PC-9 (cell line): ENCODE measurements at regions of chr7 and their contacts with region 1.

Region 1: DNA sequence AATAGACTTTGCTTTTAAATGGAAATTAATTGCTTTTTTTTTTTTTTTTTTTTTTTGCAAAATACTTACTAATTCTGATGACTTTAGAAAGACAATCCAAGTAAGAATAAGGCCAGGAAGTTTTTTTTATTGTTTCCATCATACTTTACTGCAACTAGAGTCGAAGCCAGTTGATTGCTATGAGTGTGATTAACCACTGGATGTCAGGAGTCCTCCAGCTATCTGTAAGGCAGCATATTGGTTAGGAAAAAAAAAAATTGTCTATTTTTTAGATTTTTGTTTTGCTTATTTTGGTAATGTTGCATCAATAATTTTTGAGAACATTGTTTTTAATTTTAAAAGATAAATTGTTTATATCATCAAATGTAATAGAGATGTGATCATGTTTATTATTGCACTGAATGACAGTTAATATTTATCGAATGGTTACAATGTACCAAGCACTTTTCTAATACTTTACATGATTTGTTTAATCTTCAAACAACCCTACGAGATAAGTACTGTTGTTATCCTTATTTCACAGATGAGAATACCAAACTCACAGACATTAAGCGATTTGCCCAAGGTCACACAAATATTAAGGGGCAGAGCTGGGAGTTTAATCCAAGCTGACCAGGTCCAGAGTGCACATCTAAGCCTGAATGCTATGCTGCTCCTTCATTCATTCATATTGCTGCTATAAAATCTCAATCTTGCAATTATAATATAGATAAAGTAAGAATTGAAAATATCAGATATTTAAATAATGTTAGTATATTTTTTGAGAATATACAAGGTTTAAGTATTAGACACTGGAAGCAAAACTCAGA is 19.9 kb upstream of the LMOD2 start:
- DNase-seq: no peak
- H3K4me3 ChIP-seq: no peak overlapping the region
- H3K27ac ChIP-seq: no peak overlapping the region
- H3K4me1 ChIP-seq: peaks cover 18% of the 10 kb centered on the region
- H3K27me3 ChIP-seq: no peaks in the 10 kb centered on the region
- CTCF ChIP-seq: peak; percentile 69

Region 2: GRCh38 chr7:122743211-122743610 is 892.5 kb before region 1 on chr7:
- CTCF ChIA-PET with region 1: interaction called, 15 read pairs
- POLR2A ChIA-PET with region 1: no interaction called
- intact Hi-C with region 1: no loop called
- DNase-seq: no peak
- H3K4me3 ChIP-seq: no peak overlapping the region
- H3K27ac ChIP-seq: no peak overlapping the region
- H3K4me1 ChIP-seq: no peaks in the 10 kb centered on the region
- H3K27me3 ChIP-seq: no peaks in the 10 kb centered on the region
- CTCF ChIP-seq: no peak

Region 3: DNA sequence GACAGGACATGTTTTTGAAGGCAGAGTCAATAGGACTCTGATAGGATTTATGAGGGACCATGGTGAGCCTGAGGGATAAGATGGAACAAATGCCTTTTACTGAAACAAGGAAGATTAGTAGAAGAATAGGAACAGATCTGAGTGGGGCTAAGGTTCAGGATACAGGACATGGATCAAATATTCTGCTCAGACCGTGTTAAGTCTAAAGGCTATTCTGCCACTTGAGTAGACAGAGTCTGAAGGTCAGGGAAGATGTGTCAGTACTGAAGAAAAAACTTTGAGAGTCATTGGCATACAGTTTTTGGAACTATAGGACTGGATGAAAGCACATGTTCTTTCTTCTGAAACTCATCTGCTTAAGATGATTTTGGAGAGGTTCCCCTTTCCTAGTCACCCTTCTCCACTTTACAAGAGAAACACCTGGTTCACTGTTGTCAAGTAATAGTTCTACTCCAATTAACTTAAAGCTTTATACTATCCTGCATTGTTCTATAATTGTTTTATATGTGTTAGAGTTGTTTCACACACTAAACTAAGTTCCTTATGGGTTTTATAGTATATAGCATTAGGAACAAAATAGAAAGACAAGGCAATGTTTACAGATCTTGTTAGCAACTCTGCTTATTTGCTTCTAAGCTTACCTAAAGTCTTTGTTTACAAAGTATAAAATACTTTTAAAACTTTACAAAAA is 69.6 kb after region 1 on chr7:
- CTCF ChIA-PET with region 1: interaction called, 4 read pairs
- POLR2A ChIA-PET with region 1: no interaction called
- intact Hi-C with region 1: loop called (anchors 1 kb)
- DNase-seq: no peak
- H3K4me3 ChIP-seq: no peak overlapping the region
- H3K27ac ChIP-seq: no peak overlapping the region
- H3K4me1 ChIP-seq: no peaks in the 10 kb centered on the region
- H3K27me3 ChIP-seq: no peaks in the 10 kb centered on the region
- CTCF ChIP-seq: no peak

Region 4: DNA sequence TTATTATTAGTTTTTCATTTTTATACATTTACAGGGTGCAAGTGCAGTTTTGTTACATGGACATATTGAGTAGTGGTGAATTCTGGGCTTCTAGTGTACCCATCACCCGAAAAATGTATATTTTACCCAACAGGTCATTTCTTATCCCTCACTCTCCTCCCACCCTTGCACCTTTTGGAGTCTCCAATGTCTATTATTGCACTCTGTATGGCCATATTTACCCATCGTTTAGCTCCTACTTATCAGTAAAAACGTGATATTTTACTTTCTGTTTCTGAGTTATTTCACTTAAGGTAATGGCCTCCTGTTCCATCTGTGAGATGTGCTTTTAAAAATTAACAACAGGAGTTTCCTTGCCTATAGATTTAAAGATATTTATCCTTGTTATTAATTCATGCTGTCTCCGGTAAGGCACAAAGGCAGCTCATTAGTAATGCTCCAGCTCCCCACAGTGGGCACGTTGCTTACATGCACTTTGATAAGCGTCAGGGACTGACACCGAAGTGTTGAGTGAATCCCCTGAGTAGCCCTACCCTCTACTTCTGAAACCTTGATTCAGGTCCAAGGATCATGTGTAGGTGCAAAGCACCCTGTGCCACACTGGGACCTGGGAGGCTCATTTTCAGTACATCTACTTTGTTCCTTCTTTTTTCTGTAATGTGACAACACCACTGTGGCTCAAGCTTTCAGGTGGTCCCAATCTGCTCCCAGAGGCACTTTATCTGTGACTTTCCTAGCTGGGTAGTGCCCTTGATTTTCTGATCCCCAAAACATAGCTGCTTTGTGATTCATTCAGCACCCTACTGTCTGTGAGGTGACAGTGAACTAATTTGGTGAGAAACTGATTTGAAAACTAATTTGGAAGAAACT is 236.5 kb after region 1 on chr7:
- CTCF ChIA-PET with region 1: no interaction called
- POLR2A ChIA-PET with region 1: no interaction called
- intact Hi-C with region 1: loop called (anchors 2 kb)
- DNase-seq: peak; percentile 38 to 40
- H3K4me3 ChIP-seq: no peak overlapping the region
- H3K27ac ChIP-seq: no peak overlapping the region
- H3K4me1 ChIP-seq: no peaks in the 10 kb centered on the region
- H3K27me3 ChIP-seq: no peaks in the 10 kb centered on the region
- CTCF ChIP-seq: peak; percentile 59

Region 5: DNA sequence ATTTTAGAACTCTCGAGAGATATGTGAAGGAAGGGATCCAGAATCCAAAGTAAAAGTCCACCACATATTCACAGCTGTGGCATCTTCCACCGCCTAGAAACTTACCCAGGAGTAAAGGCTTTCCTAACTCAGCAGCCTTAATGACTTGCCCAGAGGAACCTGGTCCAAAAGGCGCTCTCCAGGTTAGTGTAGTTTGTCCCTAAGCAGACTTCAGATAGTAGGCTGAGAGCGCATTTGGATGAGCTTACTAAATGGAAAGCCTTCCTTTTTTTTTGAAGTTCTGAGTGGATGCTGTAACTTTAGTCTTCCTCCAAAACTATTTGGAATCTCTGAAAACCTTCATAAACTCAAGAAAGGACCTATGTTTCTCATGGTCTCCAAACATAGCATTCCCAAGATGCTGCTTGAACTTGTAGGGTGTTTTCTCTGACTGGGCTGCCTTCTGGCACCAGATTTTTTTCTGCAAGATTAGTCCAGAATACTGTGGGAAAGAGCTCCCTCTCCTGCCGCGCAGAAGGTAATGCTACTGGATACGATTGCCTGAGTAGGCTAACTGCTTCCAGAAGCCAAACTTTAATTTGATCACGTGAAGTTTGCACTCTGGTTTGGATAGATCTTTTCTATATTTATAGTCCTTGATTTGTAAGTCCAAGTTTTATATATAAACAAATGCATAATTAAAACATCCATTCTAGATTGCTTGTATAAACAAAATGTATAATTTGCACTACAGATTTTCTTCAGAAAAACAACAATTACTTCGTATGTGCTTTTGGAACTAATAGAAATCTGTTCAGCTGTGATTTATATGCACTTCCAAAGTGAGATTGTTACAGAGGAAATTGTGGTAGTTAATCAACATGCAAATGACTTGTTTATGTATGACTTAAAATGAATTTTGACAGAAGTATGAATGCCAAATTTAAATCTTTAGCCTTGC is 1149.4 kb after region 1 on chr7:
- CTCF ChIA-PET with region 1: no interaction called
- POLR2A ChIA-PET with region 1: no interaction called
- intact Hi-C with region 1: loop called (anchors 10 kb)
- DNase-seq: peak in 1 of 2 experiments; percentile 45
- H3K4me3 ChIP-seq: no peak overlapping the region
- H3K27ac ChIP-seq: no peak overlapping the region
- H3K4me1 ChIP-seq: no peaks in the 10 kb centered on the region
- H3K27me3 ChIP-seq: no peaks in the 10 kb centered on the region
- CTCF ChIP-seq: peak; percentile 88